Aorta (tissue), 5 donors: ENCODE measurements at regions of chr1 and their contacts with region 1.

Region 1: DNA sequence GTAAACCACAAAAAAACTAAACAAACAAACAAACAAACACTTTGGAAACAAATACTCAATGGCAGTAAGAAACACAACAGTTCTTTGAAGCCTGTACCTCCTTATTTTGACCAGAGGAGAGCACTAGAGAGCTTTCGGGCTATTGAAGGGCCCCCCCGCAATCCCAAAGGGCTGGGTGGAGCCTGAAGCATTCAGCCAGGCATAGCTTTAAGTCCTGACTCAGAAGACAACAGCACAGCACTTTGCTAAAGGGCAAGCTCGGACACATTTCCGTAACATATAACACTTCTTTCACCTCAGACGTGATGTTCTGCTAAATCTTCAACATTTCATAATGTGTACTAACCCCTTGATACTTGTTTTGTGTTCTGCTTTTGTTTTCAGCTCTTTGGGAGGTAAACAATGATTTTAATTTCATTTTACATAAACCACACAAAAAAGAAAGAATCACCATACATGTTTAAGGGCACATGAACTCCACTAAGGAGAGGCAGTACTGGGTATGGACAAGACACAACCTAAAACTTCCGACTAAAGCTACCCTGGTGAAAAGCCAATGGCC is 9.7 kb upstream of the SHCBP1L start:
- DNase-seq: peak; percentile 85 to 90
- ATAC-seq: peak; percentile 97
- H3K4me3 ChIP-seq: peak overlapping the region; percentile 30 to 76
- H3K27ac ChIP-seq: no peak overlapping the region
- H3K4me1 ChIP-seq: no peaks in the 10 kb centered on the region
- H3K27me3 ChIP-seq: no peaks in the 10 kb centered on the region

Region 2: DNA sequence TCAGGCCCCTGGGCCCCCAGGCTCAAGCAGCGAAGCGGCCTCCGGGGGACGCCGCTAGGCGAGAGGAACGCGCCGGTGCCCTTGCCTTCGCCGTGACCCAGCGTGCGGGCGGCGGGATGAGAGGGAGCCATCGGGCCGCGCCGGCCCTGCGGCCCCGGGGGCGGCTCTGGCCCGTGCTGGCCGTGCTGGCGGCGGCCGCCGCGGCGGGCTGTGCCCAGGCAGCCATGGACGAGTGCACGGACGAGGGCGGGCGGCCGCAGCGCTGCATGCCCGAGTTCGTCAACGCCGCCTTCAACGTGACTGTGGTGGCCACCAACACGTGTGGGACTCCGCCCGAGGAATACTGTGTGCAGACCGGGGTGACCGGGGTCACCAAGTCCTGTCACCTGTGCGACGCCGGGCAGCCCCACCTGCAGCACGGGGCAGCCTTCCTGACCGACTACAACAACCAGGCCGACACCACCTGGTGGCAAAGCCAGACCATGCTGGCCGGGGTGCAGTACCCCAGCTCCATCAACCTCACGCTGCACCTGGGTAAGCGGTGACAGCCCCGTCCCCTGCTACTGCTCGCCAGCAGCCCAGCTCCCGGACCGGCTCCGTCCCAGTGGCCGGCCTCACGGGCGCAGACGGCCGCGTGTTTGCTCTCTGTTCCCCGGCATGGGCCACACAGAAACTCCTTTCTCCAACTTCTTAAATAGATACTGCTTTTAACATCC is 61.1 kb after region 1 on chr1:
- intact Hi-C with region 1: loop called (anchors 2 to 5 kb)
- DNase-seq: peak; percentile 62 to 83
- ATAC-seq: peak; percentile 31
- H3K4me3 ChIP-seq: peak overlapping the region; percentile 77 to 85
- H3K27ac ChIP-seq: peak overlapping the region; percentile 60 to 98
- H3K4me1 ChIP-seq: peaks cover 0 to 4% of the 10 kb centered on the region in 2 donors
- H3K27me3 ChIP-seq: no peaks in the 10 kb centered on the region

Region 3: DNA sequence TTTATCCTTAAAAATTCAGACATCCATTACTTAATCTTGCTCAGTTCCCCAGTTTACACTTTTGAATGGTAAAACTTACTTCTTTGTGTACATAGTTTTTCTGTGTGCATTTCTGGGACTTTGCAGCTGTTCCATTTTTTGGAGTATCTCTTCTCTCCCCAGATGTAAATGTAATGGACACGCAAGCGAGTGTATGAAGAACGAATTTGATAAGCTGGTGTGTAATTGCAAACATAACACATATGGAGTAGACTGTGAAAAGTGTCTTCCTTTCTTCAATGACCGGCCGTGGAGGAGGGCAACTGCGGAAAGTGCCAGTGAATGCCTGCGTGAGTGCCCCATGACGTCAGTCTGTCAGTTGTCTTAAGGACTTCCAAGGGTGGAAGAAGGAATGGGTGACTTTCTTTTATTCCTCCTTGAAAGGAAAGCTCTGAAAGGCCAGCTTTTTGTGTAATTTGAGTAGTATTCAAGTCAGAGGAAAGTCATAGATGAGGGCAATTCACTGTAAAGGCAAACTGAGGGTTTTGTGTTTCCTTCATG is 147.8 kb after region 1 on chr1:
- intact Hi-C with region 1: loop called in 1 of 2 experiments (anchors 10 kb)
- DNase-seq: no peak
- ATAC-seq: no peak
- H3K4me3 ChIP-seq: no peak overlapping the region
- H3K27ac ChIP-seq: no peak overlapping the region
- H3K4me1 ChIP-seq: peaks cover 3% of the 10 kb centered on the region in 2 donors
- H3K27me3 ChIP-seq: no peaks in the 10 kb centered on the region

Region 4: GRCh38 chr1:183148599-183148998 is 186.0 kb after region 1 on chr1:
- intact Hi-C with region 1: loop called in 1 of 2 experiments (anchors 10 kb)
- DNase-seq: no peak
- ATAC-seq: peak; percentile 74
- H3K4me3 ChIP-seq: no peak overlapping the region
- H3K27ac ChIP-seq: no peak overlapping the region
- H3K4me1 ChIP-seq: peaks cover 0 to 4% of the 10 kb centered on the region in 2 donors
- H3K27me3 ChIP-seq: no peaks in the 10 kb centered on the region

Region 5: GRCh38 chr1:183234660-183235476 is 272.2 kb after region 1 on chr1:
- intact Hi-C with region 1: loop called (anchors 5 kb)
- DNase-seq: peak in 1 of 2 donors; percentile 78
- ATAC-seq: peak; percentile 90
- H3K4me3 ChIP-seq: peak overlapping the region; percentile 16 to 68
- H3K27ac ChIP-seq: peak overlapping the region in 1 of 2 donors; percentile 94
- H3K4me1 ChIP-seq: no peaks in the 10 kb centered on the region
- H3K27me3 ChIP-seq: no peaks in the 10 kb centered on the region

Region 6: GRCh38 chr1:183318433-183318832 is 355.8 kb after region 1 on chr1:
- intact Hi-C with region 1: loop called in 1 of 2 experiments (anchors 10 kb)
- DNase-seq: peak; percentile 85 to 89
- ATAC-seq: peak; percentile 94
- H3K4me3 ChIP-seq: no peak overlapping the region
- H3K27ac ChIP-seq: peak overlapping the region; percentile 11 to 53
- H3K4me1 ChIP-seq: no peaks in the 10 kb centered on the region
- H3K27me3 ChIP-seq: no peaks in the 10 kb centered on the region